Activated naive CD4-positive, alpha-beta T cell treated with anti-CD3 and anti-CD28 coated beads for 36 hours (primary cell): ENCODE measurements at regions of chr16 and their contacts with region 1.

Region 1: GRCh38 chr16:27367461-27368357 is 34.3 kb upstream of the IL21R start:
- DNase-seq: peak; percentile 97
- H3K4me3 Mint-ChIP-seq: peak overlapping the region; percentile 53
- H3K27ac Mint-ChIP-seq: peak overlapping the region; percentile 99
- H3K4me1 Mint-ChIP-seq: peaks cover 76% of the 10 kb centered on the region
- H3K27me3 Mint-ChIP-seq: no peaks in the 10 kb centered on the region

Region 2: GRCh38 chr16:27154705-27155521 is 212.8 kb before region 1 on chr16:
- CTCF ChIA-PET with region 1: interaction called, 55 read pairs
- intact Hi-C with region 1: loop called (anchors 1 kb)
- DNase-seq: peak; percentile 83
- H3K4me3 Mint-ChIP-seq: no peak overlapping the region
- H3K27ac Mint-ChIP-seq: no peak overlapping the region
- H3K4me1 Mint-ChIP-seq: peaks cover 14% of the 10 kb centered on the region
- H3K27me3 Mint-ChIP-seq: no peaks in the 10 kb centered on the region

Region 3: GRCh38 chr16:27179500-27180072 is 188.1 kb before region 1 on chr16:
- CTCF ChIA-PET with region 1: interaction called, 70 read pairs
- intact Hi-C with region 1: loop called (anchors 1 kb)
- DNase-seq: peak; percentile 98
- H3K4me3 Mint-ChIP-seq: no peak overlapping the region
- H3K27ac Mint-ChIP-seq: peak overlapping the region; percentile 67
- H3K4me1 Mint-ChIP-seq: peaks cover 48% of the 10 kb centered on the region
- H3K27me3 Mint-ChIP-seq: no peaks in the 10 kb centered on the region

Region 4: GRCh38 chr16:27225536-27226360 is 142.0 kb before region 1 on chr16:
- CTCF ChIA-PET with region 1: interaction called, 26 read pairs
- intact Hi-C with region 1: no loop called
- DNase-seq: no peak
- H3K4me3 Mint-ChIP-seq: no peak overlapping the region
- H3K27ac Mint-ChIP-seq: peak overlapping the region; percentile 28
- H3K4me1 Mint-ChIP-seq: peaks cover 28% of the 10 kb centered on the region
- H3K27me3 Mint-ChIP-seq: no peaks in the 10 kb centered on the region

Region 5: GRCh38 chr16:27355610-27356009 is 12.1 kb before region 1 on chr16:
- CTCF ChIA-PET with region 1: interaction called, 30 read pairs
- intact Hi-C with region 1: no loop called
- DNase-seq: peak; percentile 71
- H3K4me3 Mint-ChIP-seq: no peak overlapping the region
- H3K27ac Mint-ChIP-seq: peak overlapping the region; percentile 76
- H3K4me1 Mint-ChIP-seq: peaks cover 13% of the 10 kb centered on the region
- H3K27me3 Mint-ChIP-seq: no peaks in the 10 kb centered on the region

Region 6: GRCh38 chr16:27426423-27427408 is 59.0 kb after region 1 on chr16:
- CTCF ChIA-PET with region 1: no interaction called
- intact Hi-C with region 1: no loop called
- DNase-seq: peak; percentile 94
- H3K4me3 Mint-ChIP-seq: peak overlapping the region; percentile 29
- H3K27ac Mint-ChIP-seq: peak overlapping the region; percentile 92
- H3K4me1 Mint-ChIP-seq: peaks cover 83% of the 10 kb centered on the region
- H3K27me3 Mint-ChIP-seq: no peaks in the 10 kb centered on the region

Region 7: GRCh38 chr16:27461483-27462171 is 93.9 kb after region 1 on chr16:
- CTCF ChIA-PET with region 1: interaction called, 8 read pairs
- intact Hi-C with region 1: loop called (anchors 1 kb)
- DNase-seq: no peak
- H3K4me3 Mint-ChIP-seq: no peak overlapping the region
- H3K27ac Mint-ChIP-seq: no peak overlapping the region
- H3K4me1 Mint-ChIP-seq: peaks cover 30% of the 10 kb centered on the region
- H3K27me3 Mint-ChIP-seq: no peaks in the 10 kb centered on the region